H1 (cell line): ENCODE measurements at regions of chr1 and their contacts with region 1.

Region 1: DNA sequence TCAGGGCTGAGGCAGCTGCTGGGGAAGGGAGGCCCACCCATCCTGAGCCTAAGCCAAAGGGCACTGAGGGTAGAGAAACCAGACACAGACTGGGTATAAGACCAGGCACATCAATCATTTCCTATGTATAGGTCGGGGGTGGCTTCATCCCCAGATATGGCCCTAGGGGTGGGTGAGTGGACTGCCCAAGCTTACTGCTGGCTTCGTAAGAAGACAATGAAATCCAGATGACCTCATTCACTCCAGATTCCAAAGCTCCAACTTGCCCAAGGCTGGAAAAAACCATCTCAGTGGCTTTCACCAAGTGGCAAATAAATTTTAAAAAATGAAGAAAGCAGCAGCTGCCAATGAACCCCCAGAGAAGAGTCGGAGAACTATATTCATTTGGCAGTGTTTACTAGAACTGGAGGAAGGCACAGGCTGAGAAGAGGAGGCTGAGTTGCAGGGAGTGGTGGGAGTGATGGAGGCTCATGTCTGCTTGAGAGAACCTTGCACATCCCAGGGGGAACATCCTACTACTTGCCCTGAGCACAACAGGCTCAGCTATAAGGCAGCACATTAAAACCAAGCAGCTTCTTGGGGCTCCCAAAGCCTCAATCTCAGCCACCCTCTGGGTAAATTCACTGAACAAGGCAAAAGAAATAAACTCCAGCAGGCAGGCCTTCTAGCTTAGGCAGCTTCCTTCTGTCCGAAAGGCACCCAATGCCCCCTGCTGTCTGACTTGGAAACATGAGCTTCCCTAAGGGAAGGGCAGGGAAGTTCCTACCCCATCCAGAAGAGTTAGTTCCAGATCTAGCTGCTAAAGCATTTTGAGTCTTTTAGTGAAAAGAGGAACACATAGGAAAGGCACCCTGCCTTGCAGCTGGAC is 14.1 kb downstream of the PEA15 start:
- DNase-seq: no peak
- H3K4me3 ChIP-seq: no peak overlapping the region
- H3K27ac ChIP-seq: no peak overlapping the region
- H3K4me1 ChIP-seq: no peaks in the 10 kb centered on the region
- H3K27me3 ChIP-seq: no peaks in the 10 kb centered on the region
- CTCF ChIP-seq: peak; percentile 35 to 66 (median 48)
- EP300 ChIP-seq: no peak
- POLR2A ChIP-seq: no peak
- RAD21 ChIP-seq: peak; percentile 66 to 80

Region 2: DNA sequence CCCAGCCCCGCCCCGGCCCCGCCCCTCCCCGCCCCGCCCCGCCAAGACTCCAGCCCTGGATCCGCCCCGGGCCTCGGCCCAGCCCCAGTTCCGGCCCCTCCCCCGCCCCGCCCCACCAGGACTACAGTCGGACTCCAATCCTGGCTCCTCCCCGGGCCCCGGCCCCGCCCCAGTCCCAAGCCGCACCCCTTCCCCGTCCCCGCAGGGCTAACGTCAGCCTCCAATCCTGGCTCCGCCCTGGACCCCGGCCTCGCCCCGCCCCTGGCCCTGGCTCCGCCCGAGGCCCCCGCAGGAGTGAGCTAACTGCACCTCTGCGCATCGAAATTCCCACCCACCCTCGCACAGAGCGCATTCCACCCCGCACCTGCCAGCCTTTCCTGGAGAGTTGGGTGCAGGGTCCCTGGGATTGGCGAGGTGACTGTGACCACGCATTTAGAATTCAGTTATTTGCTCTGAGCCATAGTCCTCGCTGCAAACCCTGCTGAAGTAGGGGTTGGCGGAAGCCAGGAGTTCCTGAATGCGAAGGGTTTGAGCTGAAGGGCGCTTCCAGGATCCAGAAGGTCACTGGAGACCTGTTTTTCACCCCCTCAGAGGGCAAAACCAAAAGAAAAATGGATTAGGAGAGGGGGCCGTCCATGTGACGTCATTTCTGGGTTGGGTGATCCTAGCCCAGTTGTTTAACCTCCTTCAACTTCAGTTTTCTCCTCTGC is 120.3 kb before region 1 on chr1:
- CTCF ChIA-PET with region 1: interaction called, 76 read pairs
- POLR2A ChIA-PET with region 1: interaction called, 6 read pairs
- DNase-seq: peak; percentile 81 to 99
- H3K4me3 ChIP-seq: peak overlapping the region; percentile 33 to 56 (median 50); a peak in 7 of 8 replicates
- H3K27ac ChIP-seq: peak overlapping the region; percentile 21; the same call in 1 of the 2 replicates
- H3K4me1 ChIP-seq: peaks cover 12 to 50% (median 33%) of the 10 kb centered on the region in 4 experiments
- H3K27me3 ChIP-seq: no peaks in the 10 kb centered on the region
- CTCF ChIP-seq: no peak
- EP300 ChIP-seq: no peak
- POLR2A ChIP-seq: no peak
- RAD21 ChIP-seq: 0 out of 4 replicates have a peak, but pooled peaks of 1 of the 2 experiments have one; percentile 3

Region 3: DNA sequence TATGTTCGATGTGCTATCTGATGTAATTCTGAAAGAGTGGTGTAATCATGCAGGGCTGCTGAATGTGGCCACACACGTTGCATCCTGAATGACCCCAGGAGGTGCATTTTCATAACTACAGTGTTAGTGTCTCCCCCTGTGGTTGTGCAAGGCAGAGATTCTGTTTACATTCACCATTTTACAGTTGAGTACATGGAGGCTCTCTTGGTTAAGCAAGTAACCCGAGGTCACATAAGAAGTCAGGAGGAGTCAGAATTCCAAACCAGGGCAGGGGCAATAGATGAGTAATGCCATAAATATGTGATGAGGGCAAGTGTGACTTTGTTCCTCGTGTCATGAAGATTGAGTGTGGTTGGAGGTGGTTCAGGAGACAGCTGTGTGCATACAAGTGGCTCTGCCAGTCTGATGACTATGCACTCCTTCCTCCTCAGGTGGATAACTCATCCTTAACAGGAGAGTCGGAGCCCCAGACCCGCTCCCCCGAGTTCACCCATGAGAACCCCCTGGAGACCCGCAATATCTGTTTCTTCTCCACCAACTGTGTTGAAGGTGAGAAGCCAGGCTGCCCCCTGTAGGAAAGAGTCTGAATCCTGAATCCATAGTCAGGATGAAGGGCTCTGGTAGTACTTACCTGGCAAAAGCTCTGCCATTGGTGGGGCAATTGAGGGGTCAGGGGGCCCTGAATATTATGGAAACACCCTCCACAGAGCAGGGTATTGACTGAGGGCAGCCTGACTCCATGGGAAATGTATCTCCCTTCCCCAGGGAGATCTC is 94.4 kb before region 1 on chr1:
- CTCF ChIA-PET with region 1: interaction called, 11 read pairs
- POLR2A ChIA-PET with region 1: interaction called, 3 read pairs
- DNase-seq: no peak
- H3K4me3 ChIP-seq: no peak overlapping the region
- H3K27ac ChIP-seq: no peak overlapping the region
- H3K4me1 ChIP-seq: peaks cover 0 to 6% (median 0%) of the 10 kb centered on the region in 4 experiments; a peak in 2 of 7 replicates
- H3K27me3 ChIP-seq: no peaks in the 10 kb centered on the region
- CTCF ChIP-seq: peak in 2 of 3 experiments; percentile 25 to 39; a peak in 3 of 4 replicates
- EP300 ChIP-seq: no peak
- POLR2A ChIP-seq: no peak
- RAD21 ChIP-seq: peak; percentile 30 to 47; a peak in 3 of 4 replicates

Region 4: DNA sequence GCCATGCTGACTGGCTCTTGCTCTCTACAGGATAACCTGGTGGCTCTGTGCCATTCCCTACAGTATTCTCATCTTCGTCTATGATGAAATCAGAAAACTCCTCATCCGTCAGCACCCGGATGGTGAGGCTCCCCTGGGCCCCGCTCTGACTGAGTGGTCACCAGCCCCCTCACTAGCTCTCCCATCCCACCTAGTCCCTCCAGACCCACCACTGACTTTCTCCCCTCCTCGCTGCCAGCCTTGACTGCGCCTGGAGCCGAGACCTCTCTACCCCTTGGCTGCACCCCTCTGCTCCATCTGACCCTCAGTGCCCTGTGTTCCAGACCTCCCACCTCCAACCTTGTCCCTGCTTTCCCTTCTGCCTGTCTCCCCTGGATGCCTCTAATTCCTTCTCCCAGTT is 33.0 kb before region 1 on chr1:
- CTCF ChIA-PET with region 1: interaction called, 103 read pairs
- POLR2A ChIA-PET with region 1: interaction called, 8 read pairs
- DNase-seq: no peak
- H3K4me3 ChIP-seq: no peak overlapping the region
- H3K27ac ChIP-seq: no peak overlapping the region
- H3K4me1 ChIP-seq: peaks cover 0 to 6% (median 3%) of the 10 kb centered on the region in 4 experiments; a peak in 4 of 7 replicates
- H3K27me3 ChIP-seq: no peaks in the 10 kb centered on the region
- CTCF ChIP-seq: no peak
- EP300 ChIP-seq: no peak
- POLR2A ChIP-seq: no peak
- RAD21 ChIP-seq: no peak

Region 5: DNA sequence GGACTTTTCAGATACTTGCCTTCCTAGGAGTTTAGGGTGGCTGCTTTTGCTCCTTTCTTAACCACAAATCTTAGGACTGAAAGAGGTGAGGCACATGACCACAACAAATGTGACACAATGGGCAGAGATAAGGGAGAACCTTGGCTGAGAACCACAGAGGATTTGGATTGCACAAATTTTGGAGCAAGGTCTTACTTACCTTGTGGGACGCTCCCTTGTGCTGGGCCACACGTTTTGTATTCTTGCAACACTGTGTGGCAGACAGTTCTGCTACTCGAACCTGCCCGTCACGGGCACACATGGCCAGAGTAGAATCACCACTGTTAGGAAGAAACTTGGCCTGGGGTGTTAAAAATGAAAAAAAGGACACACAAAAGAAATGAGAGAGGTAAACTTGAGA is 19.1 kb after region 1 on chr1:
- CTCF ChIA-PET with region 1: interaction called, 21 read pairs
- POLR2A ChIA-PET with region 1: interaction called, 4 read pairs
- DNase-seq: no peak
- H3K4me3 ChIP-seq: no peak overlapping the region
- H3K27ac ChIP-seq: no peak overlapping the region
- H3K4me1 ChIP-seq: no peaks in the 10 kb centered on the region
- H3K27me3 ChIP-seq: no peaks in the 10 kb centered on the region
- CTCF ChIP-seq: no peak
- EP300 ChIP-seq: no peak
- POLR2A ChIP-seq: no peak
- RAD21 ChIP-seq: no peak

Region 6: GRCh38 chr1:160261893-160262794 is 42.8 kb after region 1 on chr1 and contains the start of gene DCAF8:
- CTCF ChIA-PET with region 1: interaction called, 10 read pairs
- POLR2A ChIA-PET with region 1: interaction called, 5 read pairs
- DNase-seq: peak; percentile 92 to 98
- H3K4me3 ChIP-seq: peak within 1 kb of the TSS; percentile 91 to 99 (median 96)
- H3K27ac ChIP-seq: peak within 1 kb of the TSS; percentile 97
- H3K4me1 ChIP-seq: peaks cover 2 to 13% (median 5%) of the 10 kb centered on the region in 4 experiments; a peak in 6 of 7 replicates
- H3K27me3 ChIP-seq: no peaks in the 10 kb centered on the region
- CTCF ChIP-seq: no peak
- EP300 ChIP-seq: no peak
- POLR2A ChIP-seq: peak; percentile 98 to 99
- RAD21 ChIP-seq: no peak
- total RNA-seq, gene DCAF8: 110 and 113 TPM in 2 replicates

Region 7: GRCh38 chr1:160309180-160309530 is 89.9 kb after region 1 on chr1:
- CTCF ChIA-PET with region 1: no interaction called
- POLR2A ChIA-PET with region 1: no interaction called
- DNase-seq: no peak
- H3K4me3 ChIP-seq: no peak overlapping the region
- H3K27ac ChIP-seq: no peak overlapping the region
- H3K4me1 ChIP-seq: peaks cover 4 to 11% (median 8%) of the 10 kb centered on the region in 4 experiments
- H3K27me3 ChIP-seq: no peaks in the 10 kb centered on the region
- CTCF ChIP-seq: no peak
- EP300 ChIP-seq: no peak
- POLR2A ChIP-seq: no peak
- RAD21 ChIP-seq: no peak